ENCODE measurements at regions of chr12 and their contacts with region 1.

Region 1: GRCh38 chr12:95574799-95575452 is 23.6 kb upstream of the USP44 start:
- DNase-seq: no peak
- H3K4me3 ChIP-seq: no peak overlapping the region
- H3K27ac ChIP-seq: no peak overlapping the region
- H3K4me1 ChIP-seq: no peaks in the 10 kb centered on the region
- H3K27me3 ChIP-seq: no peaks in the 10 kb centered on the region
- CTCF ChIP-seq: peak; percentile 52 to 68 (median 63)
- EP300 ChIP-seq: no peak
- POLR2A ChIP-seq: no peak

Region 2: DNA sequence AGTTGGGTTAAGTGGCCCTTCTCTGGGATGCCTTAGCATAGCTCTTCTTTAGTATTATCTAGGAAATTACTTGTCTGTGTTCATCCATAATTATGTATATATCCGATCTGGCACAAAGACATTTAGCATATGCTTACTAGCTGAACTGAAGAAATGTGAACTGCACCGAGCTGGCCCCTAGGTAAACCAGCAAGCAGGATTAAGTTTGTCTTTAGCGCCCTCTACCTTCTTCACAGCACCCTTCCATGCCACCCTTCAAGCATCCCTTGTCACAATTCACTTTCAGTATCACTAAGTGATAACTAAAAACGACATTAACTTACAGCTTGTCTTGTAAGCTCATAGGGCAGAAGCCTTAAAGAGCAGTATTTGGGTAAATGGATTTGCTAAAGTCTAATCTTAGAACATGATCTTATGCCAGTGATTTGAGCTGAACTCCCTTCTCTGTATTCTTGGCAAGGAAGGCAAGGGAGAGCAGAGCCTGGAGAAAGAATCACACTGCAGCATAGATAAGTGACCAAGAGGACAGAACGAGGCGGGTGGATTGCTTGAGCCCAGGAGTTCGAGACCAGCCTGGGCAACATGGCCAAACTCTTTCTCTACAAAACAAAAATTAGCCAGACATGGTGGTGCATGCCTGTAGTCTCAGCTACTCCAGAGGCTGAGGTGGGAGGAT is 423.8 kb after region 1 on chr12:
- in situ Hi-C with region 1: loop called in 2 of 4 experiments (anchors 25 kb)
- intact Hi-C with region 1: no loop called
- DNase-seq: peak; percentile 33
- H3K4me3 ChIP-seq: no peak overlapping the region
- H3K27ac ChIP-seq: no peak overlapping the region
- H3K4me1 ChIP-seq: peaks cover 0 to 7% (median 2%) of the 10 kb centered on the region in 4 donors
- H3K27me3 ChIP-seq: no peaks in the 10 kb centered on the region
- CTCF ChIP-seq: peak; percentile 62 to 67 (median 64)
- EP300 ChIP-seq: no peak
- POLR2A ChIP-seq: no peak

Region 3: DNA sequence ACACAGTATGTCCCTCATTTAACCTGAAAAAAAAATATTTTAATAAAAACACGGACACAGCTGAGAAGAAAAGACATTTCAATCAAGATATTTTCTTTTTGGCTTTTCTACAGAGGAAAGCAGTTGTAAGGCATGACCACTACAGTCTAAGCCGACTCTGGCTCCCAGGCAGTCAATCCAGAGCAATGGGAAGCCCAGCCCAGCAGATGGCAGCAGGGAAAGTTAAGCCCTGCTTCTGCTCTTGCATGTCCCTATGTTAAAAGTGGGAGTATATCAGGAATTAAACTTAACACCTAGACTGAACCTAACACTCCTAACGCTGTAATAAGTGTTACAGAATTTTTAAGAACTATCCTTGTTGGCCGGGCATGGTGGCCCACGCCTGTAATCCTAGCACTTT is 440.7 kb after region 1 on chr12:
- in situ Hi-C with region 1: loop called in 1 of 4 experiments (anchors 25 kb)
- intact Hi-C with region 1: no loop called
- DNase-seq: no peak
- H3K4me3 ChIP-seq: no peak overlapping the region
- H3K27ac ChIP-seq: no peak overlapping the region
- H3K4me1 ChIP-seq: no peaks in the 10 kb centered on the region
- H3K27me3 ChIP-seq: no peaks in the 10 kb centered on the region
- CTCF ChIP-seq: peak in 1 of 5 experiments; percentile 20
- EP300 ChIP-seq: no peak
- POLR2A ChIP-seq: no peak

Measured in transverse colon (tissue), 4 donors.